ENCODE measurements at regions of chr1 and their contacts with region 1.

Region 1: GRCh38 chr1:95116580-95117206 is 462 bp upstream of the TLCD4 start:
- DNase-seq: peak; percentile 6 to 34
- ATAC-seq: peak; percentile 62 to 72
- H3K4me3 ChIP-seq: peak overlapping the region; percentile 62 to 86 (median 69)
- H3K27ac ChIP-seq: peak overlapping the region; percentile 70 to 89 (median 84)
- H3K4me1 ChIP-seq: peaks cover 4 to 14% of the 10 kb centered on the region in 2 donors
- H3K27me3 ChIP-seq: no peaks in the 10 kb centered on the region
- CTCF ChIP-seq: peak; percentile 24 to 70 (median 44)
- POLR2A ChIP-seq: no peak

Region 2: DNA sequence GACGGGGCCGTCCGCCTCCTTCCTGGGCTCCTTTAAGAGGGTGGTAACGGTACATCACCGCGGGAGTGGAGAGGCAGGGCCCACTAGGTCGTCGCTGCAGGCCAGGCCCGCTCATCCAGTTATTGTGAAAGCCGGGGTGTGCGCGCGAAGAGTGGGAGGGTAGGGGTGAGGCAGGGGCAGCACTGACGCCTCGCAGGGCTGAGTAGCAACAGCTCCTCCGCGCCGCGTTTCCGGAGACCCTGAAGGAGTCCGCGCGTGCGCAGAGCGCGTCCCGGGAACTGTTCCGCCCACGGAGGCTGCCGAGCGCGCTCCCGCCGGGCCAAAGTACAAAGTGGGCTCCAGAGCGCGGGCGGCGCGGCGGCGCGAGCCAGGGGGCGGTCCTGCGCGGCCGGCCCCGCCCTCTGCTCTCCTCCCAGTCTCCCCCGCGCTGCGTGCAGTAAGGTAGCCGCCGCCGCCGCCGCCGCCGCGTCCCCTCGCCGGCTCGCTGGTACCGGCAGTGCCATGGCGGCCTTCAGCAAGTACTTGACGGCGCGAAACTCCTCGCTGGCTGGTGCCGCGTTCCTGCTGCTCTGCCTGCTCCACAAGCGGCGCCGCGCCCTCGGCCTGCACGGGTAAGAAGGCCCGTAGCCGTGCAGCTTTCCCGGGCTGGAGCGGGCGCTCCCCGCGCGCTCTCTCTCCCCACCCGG is 698.6 kb before region 1 on chr1 and contains the start of gene ABCD3:
- in situ Hi-C with region 1: no loop called
- intact Hi-C with region 1: loop called (anchors 5 kb)
- DNase-seq: peak; percentile 93 to 97
- ATAC-seq: peak; percentile 89 to 91
- H3K4me3 ChIP-seq: peak within 1 kb of the TSS; percentile 91 to 98 (median 94)
- H3K27ac ChIP-seq: peak within 1 kb of the TSS; percentile 86 to 93 (median 88)
- H3K4me1 ChIP-seq: peaks cover 33 to 37% of the 10 kb centered on the region in 2 donors
- H3K27me3 ChIP-seq: no peaks in the 10 kb centered on the region
- CTCF ChIP-seq: no peak
- POLR2A ChIP-seq: peak; percentile 83 to 91
- total RNA-seq, gene ABCD3: 33.4 to 42.8 (median 36.6) TPM

Region 3: DNA sequence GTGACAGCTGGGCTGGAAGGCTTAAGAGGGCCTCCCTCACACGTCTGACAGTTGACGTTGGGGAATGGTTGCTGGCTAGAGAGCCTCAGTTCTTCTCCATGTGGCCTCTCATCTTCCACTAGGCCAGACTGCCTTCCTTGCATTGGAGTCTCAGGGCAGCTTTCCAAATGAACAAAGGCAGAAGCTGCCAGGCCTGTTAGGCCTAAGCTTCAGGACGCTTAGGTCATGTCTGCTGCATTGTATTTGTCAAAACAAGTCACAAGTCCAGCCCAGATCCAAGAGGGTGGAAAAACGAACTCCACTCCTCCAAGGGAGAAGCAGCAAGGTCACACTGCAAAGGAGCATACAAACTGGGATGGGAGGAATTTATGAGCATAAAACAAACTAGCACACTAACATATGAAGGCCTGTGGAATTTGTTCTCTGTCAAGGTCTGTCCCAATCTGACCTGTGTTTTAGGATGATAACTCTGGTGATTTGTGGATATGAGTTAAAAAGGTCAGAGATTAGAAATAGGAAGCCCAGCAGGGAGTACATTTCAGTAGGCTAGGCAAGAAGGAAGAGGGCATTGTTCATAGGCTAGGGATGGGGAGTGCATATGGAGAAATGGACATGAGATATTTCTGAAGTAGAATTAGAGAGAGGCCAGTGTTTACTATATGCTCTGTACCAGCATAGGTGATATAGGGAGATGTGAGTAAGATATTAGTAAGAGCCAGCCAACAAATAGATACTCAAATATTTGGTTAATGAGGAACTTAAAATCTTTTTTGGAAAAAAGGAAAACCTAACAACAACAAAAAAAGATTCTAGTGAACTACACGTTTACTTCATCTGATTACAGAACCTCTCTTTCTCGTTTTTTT is 160.7 kb before region 1 on chr1:
- in situ Hi-C with region 1: no loop called
- intact Hi-C with region 1: no loop called
- DNase-seq: no peak
- ATAC-seq: no peak
- H3K4me3 ChIP-seq: no peak overlapping the region
- H3K27ac ChIP-seq: peak overlapping the region in 1 of 4 donors; percentile 45
- H3K4me1 ChIP-seq: no peaks in the 10 kb centered on the region
- H3K27me3 ChIP-seq: no peaks in the 10 kb centered on the region
- CTCF ChIP-seq: no peak
- POLR2A ChIP-seq: no peak

Region 4: DNA sequence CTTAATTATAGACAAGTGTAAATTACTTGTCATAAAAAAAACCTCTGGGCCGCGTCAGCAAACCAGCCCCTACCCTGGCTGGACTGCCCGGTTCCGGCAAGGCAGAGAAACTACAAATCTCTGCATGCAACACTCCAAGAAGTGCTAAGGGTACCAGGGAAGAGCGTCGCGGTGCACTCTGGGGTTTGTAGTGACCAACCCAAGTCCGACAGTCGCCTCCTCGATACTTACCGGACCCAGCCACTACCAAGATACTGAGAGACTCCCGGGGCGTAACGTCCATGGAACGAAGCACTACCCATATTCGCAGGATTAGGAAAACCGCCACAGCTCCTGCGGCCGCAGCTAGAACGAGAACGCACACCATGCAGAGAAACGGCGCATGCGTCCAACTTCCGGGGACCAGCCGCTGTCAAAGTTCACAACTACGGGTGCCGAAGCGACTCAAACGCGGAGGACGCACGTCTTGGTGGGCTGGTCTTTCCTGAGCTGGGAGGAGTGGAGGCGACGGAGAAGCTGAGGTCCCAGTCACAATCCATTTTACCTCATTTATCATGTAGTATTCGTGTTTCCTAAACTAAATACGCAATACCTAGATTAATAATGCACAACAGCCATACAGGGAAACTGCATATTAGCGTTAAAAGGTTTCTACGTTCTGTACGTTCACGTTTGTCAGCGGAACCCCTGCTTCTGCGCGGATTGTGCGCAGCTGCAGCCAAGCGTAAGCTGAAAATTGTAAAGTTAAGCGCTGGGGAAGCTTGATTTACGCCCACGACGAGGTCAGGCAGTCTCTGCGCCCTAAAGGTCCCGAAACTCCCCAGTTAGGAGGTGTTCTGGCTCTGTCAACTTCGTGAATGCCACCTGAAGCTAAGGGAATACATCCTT is 43.9 kb before region 1 on chr1 and contains the start of gene ALG14:
- in situ Hi-C with region 1: no loop called
- intact Hi-C with region 1: loop called (anchors 1 kb)
- DNase-seq: peak; percentile 91 to 92
- ATAC-seq: peak; percentile 99 to 100
- H3K4me3 ChIP-seq: peak within 1 kb of the TSS; percentile 73 to 83 (median 81)
- H3K27ac ChIP-seq: peak within 1 kb of the TSS; percentile 88 to 97 (median 91)
- H3K4me1 ChIP-seq: peaks cover 5 to 7% of the 10 kb centered on the region in 2 donors
- H3K27me3 ChIP-seq: no peaks in the 10 kb centered on the region
- CTCF ChIP-seq: no peak
- POLR2A ChIP-seq: peak; percentile 53 to 71
- total RNA-seq, gene ALG14: 0.24 to 0.97 (median 0.77) TPM

Region 5: DNA sequence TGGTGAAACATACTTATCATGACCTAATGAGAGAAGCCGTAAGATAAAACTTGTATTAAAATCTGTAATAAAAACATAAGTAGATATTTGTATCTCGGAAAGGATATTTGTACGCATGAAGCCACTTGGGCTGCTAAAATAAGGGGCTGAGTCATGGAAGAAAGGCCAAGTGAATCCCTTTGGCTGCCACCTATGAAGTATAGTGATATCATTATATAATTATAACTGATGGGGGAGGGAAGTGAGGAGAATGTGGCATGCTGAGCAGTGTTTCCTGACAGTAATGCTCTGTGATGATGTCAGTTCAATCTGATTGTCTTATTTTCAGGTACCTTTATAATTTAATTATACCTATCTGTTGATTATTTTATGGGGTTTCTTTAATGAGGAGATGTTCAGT is 130.9 kb after region 1 on chr1:
- in situ Hi-C with region 1: no loop called
- intact Hi-C with region 1: loop called (anchors 5 kb)
- DNase-seq: peak; percentile 7 to 46
- ATAC-seq: peak; percentile 99 to 100
- H3K4me3 ChIP-seq: no peak overlapping the region
- H3K27ac ChIP-seq: peak overlapping the region; percentile 8 to 71 (median 66)
- H3K4me1 ChIP-seq: peaks cover 21 to 31% of the 10 kb centered on the region in 2 donors
- H3K27me3 ChIP-seq: no peaks in the 10 kb centered on the region
- CTCF ChIP-seq: no peak
- POLR2A ChIP-seq: no peak

Measured in gastrocnemius medialis (tissue), 4 donors.